ENCODE measurements at regions of chr5 and their contacts with region 1.

Region 1: DNA sequence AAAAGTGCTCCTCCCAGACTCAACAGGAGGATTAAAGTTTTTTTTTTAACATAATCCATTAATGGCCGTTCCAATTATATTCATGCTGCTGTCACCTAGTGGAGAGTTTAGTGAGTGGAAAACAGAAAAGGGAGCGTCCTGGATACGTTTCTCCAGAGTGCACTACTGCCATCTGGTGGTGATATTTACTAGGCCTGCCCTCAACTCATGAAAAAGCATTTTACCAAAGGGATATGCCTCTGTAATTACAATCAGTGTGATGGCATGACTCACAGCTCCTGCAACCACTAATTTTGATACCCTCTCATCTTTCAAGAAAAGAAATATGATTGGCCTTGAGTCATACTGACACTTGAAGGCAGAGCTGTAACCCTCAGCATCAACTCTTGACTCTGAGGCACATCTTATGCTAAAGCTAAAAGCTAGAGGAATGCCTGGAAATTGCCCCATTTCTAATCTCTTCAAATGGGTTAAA is 20.0 kb downstream of the MINAR2 start:
- DNase-seq: peak; percentile 88
- H3K4me3 Mint-ChIP-seq: no peak overlapping the region
- H3K27ac Mint-ChIP-seq: no peak overlapping the region
- H3K4me1 Mint-ChIP-seq: peaks cover 2% of the 10 kb centered on the region
- H3K27me3 Mint-ChIP-seq: no peaks in the 10 kb centered on the region

Region 2: GRCh38 chr5:128213340-128213739 is 1554.6 kb before region 1 on chr5:
- CTCF ChIA-PET with region 1: no interaction called
- intact Hi-C with region 1: loop called (anchors 1 kb)
- DNase-seq: peak; percentile 73
- H3K4me3 Mint-ChIP-seq: no peak overlapping the region
- H3K27ac Mint-ChIP-seq: no peak overlapping the region
- H3K4me1 Mint-ChIP-seq: peaks cover 2% of the 10 kb centered on the region
- H3K27me3 Mint-ChIP-seq: no peaks in the 10 kb centered on the region

Region 3: GRCh38 chr5:129113871-129114270 is 654.1 kb before region 1 on chr5:
- CTCF ChIA-PET with region 1: no interaction called
- intact Hi-C with region 1: loop called (anchors 1 kb)
- DNase-seq: no peak
- H3K4me3 Mint-ChIP-seq: no peak overlapping the region
- H3K27ac Mint-ChIP-seq: no peak overlapping the region
- H3K4me1 Mint-ChIP-seq: no peaks in the 10 kb centered on the region
- H3K27me3 Mint-ChIP-seq: no peaks in the 10 kb centered on the region

Region 4: GRCh38 chr5:129399069-129399468 is 368.9 kb before region 1 on chr5:
- CTCF ChIA-PET with region 1: no interaction called
- intact Hi-C with region 1: loop called (anchors 5 kb)
- DNase-seq: no peak
- H3K4me3 Mint-ChIP-seq: no peak overlapping the region
- H3K27ac Mint-ChIP-seq: no peak overlapping the region
- H3K4me1 Mint-ChIP-seq: no peaks in the 10 kb centered on the region
- H3K27me3 Mint-ChIP-seq: no peaks in the 10 kb centered on the region

Region 5: GRCh38 chr5:129664337-129664937 is 103.5 kb before region 1 on chr5:
- CTCF ChIA-PET with region 1: interaction called, 12 read pairs
- intact Hi-C with region 1: loop called (anchors 1 kb)
- DNase-seq: peak; percentile 60
- H3K4me3 Mint-ChIP-seq: no peak overlapping the region
- H3K27ac Mint-ChIP-seq: no peak overlapping the region
- H3K4me1 Mint-ChIP-seq: no peaks in the 10 kb centered on the region
- H3K27me3 Mint-ChIP-seq: peaks cover 14% of the 10 kb centered on the region

Region 6: GRCh38 chr5:129804705-129805104 is 36.8 kb after region 1 on chr5:
- CTCF ChIA-PET with region 1: no interaction called
- intact Hi-C with region 1: no loop called
- DNase-seq: no peak
- H3K4me3 Mint-ChIP-seq: no peak overlapping the region
- H3K27ac Mint-ChIP-seq: no peak overlapping the region
- H3K4me1 Mint-ChIP-seq: no peaks in the 10 kb centered on the region
- H3K27me3 Mint-ChIP-seq: peaks cover 10% of the 10 kb centered on the region

Region 7: DNA sequence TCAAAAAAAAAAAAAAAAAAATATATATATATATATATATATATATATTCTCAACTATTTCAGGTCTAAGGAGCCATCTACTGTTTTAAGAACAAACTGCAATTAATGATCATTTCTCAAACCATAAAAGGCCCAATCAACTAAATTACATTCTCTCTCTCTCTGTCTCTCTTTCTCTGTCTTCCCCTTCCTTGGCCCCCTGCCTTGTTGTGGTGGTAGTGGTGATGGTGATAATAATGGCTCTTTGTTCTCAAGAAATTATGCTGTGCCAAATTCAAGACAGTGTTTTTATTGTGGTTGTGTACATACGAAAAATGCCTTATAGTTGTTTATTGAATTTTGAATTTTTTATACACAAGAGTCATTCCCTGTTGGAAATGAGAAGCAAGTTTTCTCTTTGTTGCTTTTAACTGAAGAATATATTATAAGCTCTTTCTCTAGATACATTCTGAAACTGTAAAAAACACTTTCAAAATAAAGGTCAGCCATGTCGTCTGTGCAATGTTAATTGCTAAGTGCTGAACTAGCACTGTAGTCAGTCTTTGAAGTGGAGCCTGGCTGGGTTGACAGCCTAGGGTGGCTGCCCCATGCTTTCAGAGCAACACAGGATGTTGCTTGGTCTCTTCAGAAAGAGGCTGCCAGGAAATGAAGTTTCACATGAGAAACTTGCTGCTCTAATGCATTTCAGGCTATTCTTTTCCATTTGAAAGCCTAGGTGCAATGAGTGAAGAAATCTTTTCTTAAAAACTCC is 1301.1 kb after region 1 on chr5:
- CTCF ChIA-PET with region 1: no interaction called
- intact Hi-C with region 1: loop called (anchors 1 kb)
- DNase-seq: peak; percentile 87
- H3K4me3 Mint-ChIP-seq: no peak overlapping the region
- H3K27ac Mint-ChIP-seq: peak overlapping the region; percentile 94
- H3K4me1 Mint-ChIP-seq: peaks cover 55% of the 10 kb centered on the region
- H3K27me3 Mint-ChIP-seq: no peaks in the 10 kb centered on the region

Measured in activated naive CD4-positive, alpha-beta T cell treated with anti-CD3 and anti-CD28 coated beads for 36 hours (primary cell).